HEK293 (cell line): ENCODE measurements at regions of chr20 and their contacts with region 1.

Region 1: GRCh38 chr20:50070991-50071888 is 41.7 kb downstream of the UBE2V1 start:
- H3K4me3 ChIP-seq: peak overlapping the region; percentile 27
- H3K27ac ChIP-seq: no peak overlapping the region
- H3K4me1 ChIP-seq: no peaks in the 10 kb centered on the region
- CTCF ChIP-seq: peak; percentile 98

Region 2: DNA sequence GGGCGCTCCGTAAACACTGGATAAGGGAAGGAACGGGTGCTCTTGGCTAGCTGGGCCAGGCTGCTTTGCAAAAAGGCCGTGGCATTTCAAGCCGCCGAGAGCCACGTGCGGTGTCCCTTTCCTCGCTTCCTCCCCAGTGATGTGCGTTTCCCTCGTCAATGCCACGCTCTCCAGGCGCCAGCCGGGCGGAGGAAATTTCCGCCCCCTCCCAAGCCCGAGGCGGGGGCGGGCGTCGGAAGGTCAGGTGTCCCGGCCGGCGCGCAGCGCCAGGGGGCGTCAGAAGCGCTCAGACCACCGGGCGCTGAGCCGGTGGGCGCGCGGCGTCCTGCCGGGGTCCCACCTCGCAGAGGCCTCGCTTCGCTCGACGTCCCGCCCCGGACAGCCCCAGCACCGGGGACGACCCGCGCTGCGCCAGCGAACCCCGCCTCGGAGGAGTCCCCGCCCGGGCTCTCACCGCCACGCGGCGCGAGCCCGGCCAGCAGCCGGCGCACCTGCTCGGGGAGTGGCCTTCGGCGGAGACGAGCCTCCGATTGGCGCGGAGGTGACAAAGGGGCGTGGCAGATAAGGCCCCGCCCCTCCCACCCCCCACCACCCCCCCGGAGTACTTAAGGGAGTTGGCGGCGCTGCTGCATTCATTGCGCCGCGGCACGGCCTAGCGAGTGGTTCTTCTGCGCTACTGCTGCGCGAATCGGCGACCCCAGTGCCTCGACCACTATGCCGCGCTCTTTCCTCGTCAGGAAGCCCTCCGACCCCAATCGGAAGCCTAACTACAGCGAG is 88.7 kb before region 1 on chr20 and contains the start of gene SNAI1:
- CTCF ChIA-PET with region 1: interaction called, 220 read pairs
- POLR2A ChIA-PET with region 1: interaction called, 8 read pairs
- H3K4me3 ChIP-seq: peak within 1 kb of the TSS; percentile 35
- H3K27ac ChIP-seq: no peak within 1 kb of the TSS; the same call in 1 of the 2 replicates
- H3K4me1 ChIP-seq: peaks cover 2% of the 10 kb centered on the region; the same call in 1 of the 2 replicates
- CTCF ChIP-seq: peak; percentile 67

Region 3: GRCh38 chr20:50005471-50005981 is 65.7 kb before region 1 on chr20:
- CTCF ChIA-PET with region 1: interaction called, 28 read pairs
- POLR2A ChIA-PET with region 1: no interaction called
- H3K4me3 ChIP-seq: no peak overlapping the region
- H3K27ac ChIP-seq: no peak overlapping the region
- H3K4me1 ChIP-seq: no peaks in the 10 kb centered on the region
- CTCF ChIP-seq: no peak

Region 4: GRCh38 chr20:50085452-50086365 is 14.5 kb after region 1 on chr20:
- CTCF ChIA-PET with region 1: interaction called, 79 read pairs
- POLR2A ChIA-PET with region 1: interaction called, 3 read pairs
- H3K4me3 ChIP-seq: no peak overlapping the region
- H3K27ac ChIP-seq: no peak overlapping the region
- H3K4me1 ChIP-seq: peaks cover 8% of the 10 kb centered on the region
- CTCF ChIP-seq: peak; percentile 79

Region 5: DNA sequence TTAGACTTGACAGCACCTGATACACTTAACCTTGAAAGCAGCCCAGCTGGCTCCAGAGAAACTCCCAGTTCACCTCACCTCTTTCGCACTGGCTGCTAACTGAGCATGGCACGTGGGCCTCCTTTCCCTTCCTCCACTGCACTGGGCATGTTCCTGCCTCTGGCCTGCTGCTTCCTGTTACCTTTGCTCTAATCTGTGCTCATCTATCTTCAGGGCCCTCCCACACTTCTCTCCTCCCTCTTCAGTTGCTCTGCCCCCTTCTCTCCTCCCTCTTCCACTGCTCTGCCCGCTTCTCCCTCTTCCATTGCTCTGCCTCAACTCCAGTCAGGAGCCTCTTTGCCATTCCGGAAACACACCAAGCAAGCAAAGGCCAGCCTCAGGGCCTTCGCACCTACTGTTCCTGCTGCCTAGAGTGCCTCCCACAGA is 55.5 kb after region 1 on chr20:
- CTCF ChIA-PET with region 1: no interaction called
- POLR2A ChIA-PET with region 1: no interaction called
- H3K4me3 ChIP-seq: no peak overlapping the region
- H3K27ac ChIP-seq: peak overlapping the region; percentile 9; the same call in 1 of the 2 replicates
- H3K4me1 ChIP-seq: no peaks in the 10 kb centered on the region
- CTCF ChIP-seq: no peak